ENCODE measurements at regions of chr11 and their contacts with region 1.

Region 1: GRCh38 chr11:32006799-32007388 is 84.0 kb upstream of the RCN1 start:
- DNase-seq: peak in 4 of 5 donors; percentile 7 to 31 (median 26)
- H3K4me3 ChIP-seq: no peak overlapping the region
- H3K4me3 Mint-ChIP-seq: peak overlapping the region in 1 of 8 donors; percentile 15
- H3K27ac ChIP-seq: no peak overlapping the region
- H3K27ac Mint-ChIP-seq: no peak overlapping the region
- H3K4me1 ChIP-seq: no peaks in the 10 kb centered on the region
- H3K4me1 Mint-ChIP-seq: peaks cover 0 to 3% (median under 1%) of the 10 kb centered on the region in 4 donors
- H3K27me3 ChIP-seq: peaks cover 3% of the 10 kb centered on the region
- H3K27me3 Mint-ChIP-seq: peaks cover 19 to 37% of the 10 kb centered on the region in 2 donors

Region 2: GRCh38 chr11:31240338-31240904 is 766.5 kb before region 1 on chr11:
- CTCF ChIA-PET with region 1: interaction called, 4 read pairs
- POLR2A ChIA-PET with region 1: no interaction called
- intact Hi-C with region 1: loop called (anchors 2 kb)
- DNase-seq: peak in 4 of 5 donors; percentile 7 to 29 (median 23)
- H3K4me3 ChIP-seq: no peak overlapping the region
- H3K4me3 Mint-ChIP-seq: no peak overlapping the region
- H3K27ac ChIP-seq: no peak overlapping the region
- H3K27ac Mint-ChIP-seq: no peak overlapping the region
- H3K4me1 ChIP-seq: no peaks in the 10 kb centered on the region
- H3K4me1 Mint-ChIP-seq: no peaks in the 10 kb centered on the region
- H3K27me3 ChIP-seq: no peaks in the 10 kb centered on the region
- H3K27me3 Mint-ChIP-seq: peaks cover 0 to 3% of the 10 kb centered on the region in 2 donors

Measured in CD4-positive, alpha-beta memory T cell (primary cell).